AG04449 (cell line): ENCODE measurements at regions of chr17 and their contacts with region 1.

Region 1: DNA sequence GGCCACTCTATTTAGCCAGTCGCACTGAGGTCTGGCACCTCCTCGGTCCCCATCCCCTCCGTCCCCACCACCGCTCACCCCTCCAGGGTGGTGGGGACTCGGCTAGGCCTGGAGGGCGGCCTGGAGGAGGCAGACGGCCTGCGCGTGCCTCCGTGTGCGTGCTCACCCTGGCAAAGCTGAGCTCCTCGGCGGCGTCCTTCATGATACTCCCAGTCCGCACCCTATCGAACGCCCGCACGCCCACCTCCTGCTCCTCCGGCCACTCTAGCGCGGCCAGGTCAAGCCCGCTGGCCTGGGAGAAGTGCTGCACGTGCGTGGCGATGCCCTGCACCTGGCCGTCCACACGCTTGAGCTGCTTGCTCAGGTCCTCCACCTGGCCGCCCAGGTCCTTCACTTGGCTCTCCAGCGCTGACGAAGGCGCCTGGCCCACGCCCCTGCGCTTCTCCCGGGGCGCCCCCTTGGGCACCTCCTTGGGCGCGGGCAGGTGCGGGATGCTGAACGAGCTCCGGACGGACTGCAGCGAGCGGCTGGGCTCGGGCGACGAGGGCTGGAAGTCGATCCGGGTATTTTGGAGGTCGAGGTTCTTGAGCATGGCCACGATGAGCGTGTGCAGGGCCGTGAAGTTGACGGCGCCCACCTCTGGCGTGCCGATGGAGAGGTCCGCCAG is 644 bp downstream of the QRICH2 start:
- DNase-seq: no peak
- H3K4me3 ChIP-seq: no peak overlapping the region
- CTCF ChIP-seq: no peak

Region 2: GRCh38 chr17:76252040-76252954 is 55.1 kb before region 1 on chr17:
- CTCF ChIA-PET with region 1: no interaction called
- POLR2A ChIA-PET with region 1: no interaction called
- DNase-seq: no peak
- H3K4me3 ChIP-seq: no peak overlapping the region
- CTCF ChIP-seq: no peak

Region 3: GRCh38 chr17:76327696-76328095 is 20.3 kb after region 1 on chr17:
- CTCF ChIA-PET with region 1: interaction called, 10 read pairs
- POLR2A ChIA-PET with region 1: no interaction called
- DNase-seq: no peak
- H3K4me3 ChIP-seq: no peak overlapping the region
- CTCF ChIP-seq: no peak

Region 4: DNA sequence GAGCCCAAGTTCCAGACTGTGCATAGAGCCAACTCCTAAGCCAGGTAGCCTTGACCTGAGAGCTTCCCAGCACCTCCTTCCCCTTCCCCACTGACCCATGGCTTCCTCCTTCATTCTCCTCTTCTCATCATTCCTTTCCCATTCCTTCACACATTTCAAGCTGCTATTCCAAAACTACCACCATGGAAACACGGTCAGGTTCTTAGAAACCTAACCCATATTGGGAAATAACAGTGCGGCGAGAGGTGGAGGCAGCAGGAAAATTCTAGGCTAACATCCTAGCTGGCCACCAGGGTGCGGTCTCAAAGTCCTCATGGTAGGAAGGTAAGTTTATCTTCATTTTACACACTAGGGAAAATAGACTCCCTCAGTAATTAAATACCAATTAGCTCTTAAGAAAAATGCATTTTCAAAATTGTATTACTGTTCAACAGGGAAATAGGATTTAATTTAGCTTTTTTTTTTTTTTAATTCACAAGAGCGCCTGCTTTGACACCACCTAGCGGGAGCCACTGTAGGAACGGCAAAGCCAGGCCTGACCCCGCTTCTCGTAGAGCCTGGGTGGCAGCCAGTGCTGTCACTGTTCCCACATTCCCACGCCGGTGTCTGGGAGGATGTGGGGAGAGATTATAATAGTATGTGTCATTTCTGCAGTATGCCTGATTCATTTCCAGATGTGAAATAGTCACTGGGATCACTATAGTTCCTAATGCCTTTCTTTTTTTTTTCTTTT is 63.0 kb after region 1 on chr17:
- CTCF ChIA-PET with region 1: interaction called, 11 read pairs
- POLR2A ChIA-PET with region 1: no interaction called
- DNase-seq: peak; percentile 67
- H3K4me3 ChIP-seq: no peak overlapping the region
- CTCF ChIP-seq: peak; percentile 68

Region 5: GRCh38 chr17:76623271-76624146 is 316.1 kb after region 1 on chr17:
- CTCF ChIA-PET with region 1: no interaction called
- POLR2A ChIA-PET with region 1: no interaction called
- DNase-seq: no peak
- H3K4me3 ChIP-seq: no peak overlapping the region
- CTCF ChIP-seq: peak; percentile 88